ENCODE measurements at regions of chr1 and their contacts with region 1.

Region 1: GRCh38 chr1:200415693-200416593 is 6.1 kb upstream of the ZNF281 start:
- DNase-seq: peak; percentile 97
- ATAC-seq: peak; percentile 85
- H3K4me3 ChIP-seq: peak overlapping the region in 1 of 2 experiments; percentile 7; a peak in 1 of 4 replicates
- H3K27ac ChIP-seq: peak overlapping the region; percentile 87
- H3K4me1 ChIP-seq: peaks cover 40% of the 10 kb centered on the region
- H3K27me3 ChIP-seq: no peaks in the 10 kb centered on the region
- CTCF ChIP-seq: no peak

Region 2: GRCh38 chr1:199898654-199899053 is 517.3 kb before region 1 on chr1:
- CTCF ChIA-PET with region 1: interaction called, 15 read pairs
- POLR2A ChIA-PET with region 1: no interaction called
- in situ Hi-C with region 1: no loop called
- intact Hi-C with region 1: no loop called
- DNase-seq: no peak
- ATAC-seq: no peak
- H3K4me3 ChIP-seq: no peak overlapping the region
- H3K27ac ChIP-seq: no peak overlapping the region
- H3K4me1 ChIP-seq: no peaks in the 10 kb centered on the region
- H3K27me3 ChIP-seq: no peaks in the 10 kb centered on the region
- CTCF ChIP-seq: no peak

Region 3: GRCh38 chr1:200342511-200343311 is 73.2 kb before region 1 on chr1:
- CTCF ChIA-PET with region 1: no interaction called
- POLR2A ChIA-PET with region 1: no interaction called
- in situ Hi-C with region 1: no loop called
- intact Hi-C with region 1: no loop called
- DNase-seq: no peak
- ATAC-seq: no peak
- H3K4me3 ChIP-seq: no peak overlapping the region
- H3K27ac ChIP-seq: no peak overlapping the region
- H3K4me1 ChIP-seq: no peaks in the 10 kb centered on the region
- H3K27me3 ChIP-seq: no peaks in the 10 kb centered on the region
- CTCF ChIP-seq: no peak

Region 4: DNA sequence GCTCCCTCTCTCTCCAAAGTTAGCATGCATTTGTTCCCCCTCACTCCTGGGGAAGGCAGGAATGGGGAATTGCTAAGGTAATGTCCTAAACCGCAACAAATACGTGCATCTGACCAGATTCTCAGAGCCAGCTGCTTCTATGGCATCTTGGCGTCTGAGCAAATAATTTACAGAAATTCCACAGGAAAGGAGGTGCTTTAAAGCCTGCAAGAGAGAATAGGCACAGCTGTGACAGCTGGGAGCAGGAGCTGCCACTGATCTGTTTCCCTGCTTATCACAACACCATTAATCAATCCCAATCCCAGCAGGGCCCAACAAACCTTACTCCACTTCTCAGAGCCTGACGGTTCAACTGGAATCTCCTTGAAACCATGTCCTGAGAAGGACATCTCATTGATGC is 77.4 kb after region 1 on chr1:
- CTCF ChIA-PET with region 1: no interaction called
- POLR2A ChIA-PET with region 1: no interaction called
- in situ Hi-C with region 1: no loop called
- intact Hi-C with region 1: no loop called
- DNase-seq: no peak
- ATAC-seq: no peak
- H3K4me3 ChIP-seq: no peak overlapping the region
- H3K27ac ChIP-seq: no peak overlapping the region
- H3K4me1 ChIP-seq: 0 out of 2 replicates have a peak, but pooled peaks cover 1% of the 10 kb centered on the region
- H3K27me3 ChIP-seq: no peaks in the 10 kb centered on the region; the same call in 1 of the 2 replicates
- CTCF ChIP-seq: no peak